ENCODE measurements at regions of chr3 and their contacts with region 1.

Region 1: DNA sequence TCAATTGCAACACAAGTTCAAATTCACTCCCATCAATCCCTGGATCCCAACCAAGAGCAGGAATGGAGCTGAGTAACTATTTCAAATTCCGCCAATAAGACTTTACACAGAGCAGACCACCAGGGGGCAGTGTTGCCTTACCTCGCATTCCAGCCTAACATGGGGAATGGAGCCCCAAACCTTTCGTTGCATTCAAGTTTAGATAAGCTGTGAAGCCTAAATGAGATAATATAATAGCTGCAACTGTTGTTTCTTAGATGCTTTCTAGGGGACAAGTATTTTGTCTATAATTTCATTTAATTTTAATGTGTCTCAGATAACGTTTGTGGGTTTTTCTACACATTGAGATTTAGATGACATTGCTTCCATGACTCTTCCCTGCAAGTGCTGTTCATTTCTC is 186.7 kb downstream of the NSUN3 start:
- DNase-seq: peak; percentile 30
- H3K4me3 ChIP-seq: no peak overlapping the region
- H3K27ac ChIP-seq: no peak overlapping the region
- H3K27me3 ChIP-seq: no peaks in the 10 kb centered on the region
- CTCF ChIP-seq: peak; percentile 79

Region 2: DNA sequence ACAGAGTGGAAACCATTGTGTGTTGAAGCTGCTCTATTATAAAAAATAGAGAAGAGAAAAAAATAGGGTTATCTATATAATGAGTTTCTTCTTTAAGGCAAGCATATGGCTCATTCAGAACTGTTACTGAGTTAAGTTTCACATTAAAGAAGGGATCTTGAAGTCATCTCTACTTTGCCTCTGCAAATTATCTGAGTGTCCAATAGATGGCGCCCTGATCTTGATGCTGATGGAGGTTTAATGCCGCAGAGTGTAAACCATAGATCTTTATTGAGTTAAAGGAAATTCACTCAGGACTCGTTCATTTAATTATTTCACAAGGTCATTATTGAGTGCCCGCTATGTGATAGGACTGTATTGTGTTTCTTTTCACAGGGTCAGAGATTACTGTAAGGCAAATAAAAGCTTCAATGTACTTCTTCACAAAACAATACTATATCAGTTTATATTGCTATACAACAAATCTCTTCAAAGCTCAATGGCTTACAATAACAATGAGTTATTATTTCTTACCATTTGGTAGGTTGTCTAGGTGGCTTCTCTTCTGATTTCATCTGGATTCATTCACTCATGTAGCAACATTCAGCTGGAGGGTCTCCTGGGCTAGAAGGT is 15.3 kb before region 1 on chr3:
- CTCF ChIA-PET with region 1: interaction called, 35 read pairs
- POLR2A ChIA-PET with region 1: no interaction called
- DNase-seq: no peak
- H3K4me3 ChIP-seq: no peak overlapping the region
- H3K27ac ChIP-seq: no peak overlapping the region
- H3K27me3 ChIP-seq: no peaks in the 10 kb centered on the region
- CTCF ChIP-seq: peak; percentile 60

Region 3: DNA sequence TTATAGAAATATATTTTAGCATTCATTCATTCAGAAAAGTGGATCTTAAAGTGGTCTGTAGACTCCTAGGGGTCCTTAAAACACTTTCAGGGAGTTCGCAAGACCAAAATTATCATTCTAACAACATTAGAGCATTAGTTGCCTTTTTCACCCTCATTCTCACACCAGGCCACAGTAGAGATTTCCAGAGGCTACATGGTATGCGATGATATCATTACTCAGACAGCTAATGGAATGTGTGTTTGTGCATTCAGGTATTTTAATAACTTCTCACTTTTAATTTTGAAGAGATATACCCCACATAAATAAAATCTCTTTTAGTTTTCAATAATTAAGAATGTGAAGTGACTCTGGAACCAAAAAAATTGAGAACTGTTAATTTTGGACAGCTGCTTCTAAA is 20.2 kb after region 1 on chr3:
- CTCF ChIA-PET with region 1: interaction called, 10 read pairs
- POLR2A ChIA-PET with region 1: no interaction called
- DNase-seq: no peak
- H3K4me3 ChIP-seq: no peak overlapping the region
- H3K27ac ChIP-seq: no peak overlapping the region
- H3K27me3 ChIP-seq: no peaks in the 10 kb centered on the region
- CTCF ChIP-seq: no peak

Region 4: GRCh38 chr3:94285870-94286269 is 36.3 kb after region 1 on chr3:
- CTCF ChIA-PET with region 1: interaction called, 12 read pairs
- POLR2A ChIA-PET with region 1: no interaction called
- DNase-seq: no peak
- H3K4me3 ChIP-seq: no peak overlapping the region
- H3K27ac ChIP-seq: no peak overlapping the region
- H3K27me3 ChIP-seq: no peaks in the 10 kb centered on the region
- CTCF ChIP-seq: 0 out of 2 replicates have a peak, but pooled peaks have one; percentile 16

Region 5: DNA sequence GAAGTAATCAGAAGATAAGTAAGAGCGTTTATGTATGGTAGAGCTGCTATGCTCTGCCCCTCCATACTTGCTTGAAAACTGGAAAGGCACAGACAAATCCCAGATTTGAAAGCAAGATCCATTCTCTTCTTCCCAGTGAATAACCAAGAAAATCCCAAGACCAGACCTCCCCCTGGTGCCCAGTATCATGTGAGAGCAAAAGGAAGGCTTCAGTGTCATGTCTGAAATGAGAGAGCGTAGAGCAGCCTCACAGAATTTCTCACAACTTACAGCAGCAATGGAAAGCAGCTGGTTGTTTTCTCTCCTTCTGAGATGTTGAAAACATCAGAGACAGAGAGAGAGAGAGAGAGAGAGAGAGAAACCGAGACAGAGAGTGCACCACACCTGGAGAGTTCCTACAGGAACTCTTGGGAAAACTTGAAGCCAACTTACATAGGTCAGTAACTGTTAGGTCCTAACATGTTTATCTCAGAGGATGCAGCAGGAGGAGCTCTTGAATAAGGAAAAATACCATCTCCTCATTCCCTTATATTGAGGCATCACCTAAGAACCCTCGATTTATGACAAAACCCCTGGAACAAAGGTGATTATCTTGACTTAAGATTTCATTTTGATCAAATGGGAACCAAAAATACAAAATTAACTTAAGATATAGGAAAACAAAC is 86.6 kb after region 1 on chr3:
- CTCF ChIA-PET with region 1: no interaction called
- POLR2A ChIA-PET with region 1: no interaction called
- DNase-seq: peak; percentile 26
- H3K4me3 ChIP-seq: no peak overlapping the region
- H3K27ac ChIP-seq: no peak overlapping the region
- H3K27me3 ChIP-seq: no peaks in the 10 kb centered on the region
- CTCF ChIP-seq: peak; percentile 64